Esophagus muscularis mucosa (tissue), 4 donors: ENCODE measurements at regions of chr6 and their contacts with region 1.

Region 1: GRCh38 chr6:100116411-100117194 is 122.6 kb upstream of the MCHR2 start:
- DNase-seq: no peak
- H3K4me3 ChIP-seq: no peak overlapping the region
- H3K27ac ChIP-seq: no peak overlapping the region
- H3K4me1 ChIP-seq: no peaks in the 10 kb centered on the region
- H3K27me3 ChIP-seq: no peaks in the 10 kb centered on the region
- CTCF ChIP-seq: peak; percentile 44 to 58 (median 55)
- EP300 ChIP-seq: no peak
- POLR2A ChIP-seq: no peak

Region 2: DNA sequence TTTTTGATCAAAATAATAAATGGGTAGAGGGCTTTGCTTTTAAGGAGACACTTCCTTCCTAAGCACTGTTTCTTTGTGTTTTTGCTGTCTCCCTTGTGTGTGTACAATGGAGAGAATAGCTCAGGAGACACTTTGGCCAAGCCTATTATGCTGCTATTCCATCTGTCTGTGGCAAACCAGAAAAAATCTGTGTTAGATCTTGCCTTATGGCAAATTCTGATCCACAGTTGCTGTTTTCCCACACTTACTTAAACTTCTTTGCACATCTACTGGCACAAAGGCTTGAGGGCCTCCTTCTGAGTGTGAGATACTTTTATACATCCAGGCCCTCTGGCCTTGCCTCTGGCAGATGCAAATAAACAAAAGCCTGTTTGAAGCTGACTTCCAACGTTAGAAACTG is 456.4 kb before region 1 on chr6:
- intact Hi-C with region 1: no loop called
- DNase-seq: no peak
- H3K4me3 ChIP-seq: no peak overlapping the region
- H3K27ac ChIP-seq: no peak overlapping the region
- H3K4me1 ChIP-seq: no peaks in the 10 kb centered on the region
- H3K27me3 ChIP-seq: no peaks in the 10 kb centered on the region
- CTCF ChIP-seq: no peak
- EP300 ChIP-seq: no peak
- POLR2A ChIP-seq: no peak

Region 3: DNA sequence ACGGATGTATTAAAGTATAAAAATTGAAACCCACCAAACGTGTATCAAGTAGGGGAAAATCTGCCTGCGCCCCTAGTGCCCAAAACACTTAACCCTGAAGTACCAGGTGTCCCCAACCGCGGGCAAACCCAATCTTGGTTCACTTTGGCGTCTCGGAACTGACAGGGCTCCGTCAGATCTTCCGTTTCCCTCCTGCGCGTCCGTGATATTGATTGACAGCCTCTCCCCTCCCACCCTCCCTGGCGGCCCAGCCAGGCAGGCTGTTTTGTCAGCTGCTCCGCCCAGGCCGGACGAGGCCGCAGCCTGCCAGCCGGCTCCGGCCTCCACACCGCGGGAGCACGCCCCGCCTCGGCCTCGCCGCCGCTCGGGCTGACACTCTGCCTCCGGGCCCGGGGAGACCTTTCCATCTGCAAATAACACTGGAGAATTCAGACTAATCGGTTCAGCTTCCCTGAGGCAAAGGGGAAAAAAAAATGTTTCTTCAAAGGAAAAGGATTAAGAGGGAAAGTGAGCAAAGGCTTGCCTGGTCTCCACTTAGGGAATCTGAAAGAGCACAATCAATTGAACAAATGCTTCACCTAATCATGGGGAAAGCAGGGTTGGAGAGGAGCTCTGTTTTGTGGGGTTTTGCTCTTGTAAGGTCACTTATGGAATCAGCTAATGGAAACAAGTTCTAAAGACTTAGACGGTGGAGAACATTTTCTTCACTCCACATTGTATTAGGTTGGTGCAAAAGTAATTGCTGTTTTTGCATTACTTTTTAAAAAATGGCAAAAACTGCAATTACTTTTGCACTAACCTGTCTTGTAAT is 112.4 kb after region 1 on chr6:
- intact Hi-C with region 1: no loop called
- DNase-seq: no peak
- H3K4me3 ChIP-seq: peak overlapping the region; percentile 49 to 59 (median 51)
- H3K27ac ChIP-seq: no peak overlapping the region
- H3K4me1 ChIP-seq: peaks cover 5 to 10% (median 10%) of the 10 kb centered on the region in 4 donors
- H3K27me3 ChIP-seq: no peaks in the 10 kb centered on the region
- CTCF ChIP-seq: peak in 1 of 3 experiments; percentile 7
- EP300 ChIP-seq: no peak
- POLR2A ChIP-seq: no peak

Region 4: DNA sequence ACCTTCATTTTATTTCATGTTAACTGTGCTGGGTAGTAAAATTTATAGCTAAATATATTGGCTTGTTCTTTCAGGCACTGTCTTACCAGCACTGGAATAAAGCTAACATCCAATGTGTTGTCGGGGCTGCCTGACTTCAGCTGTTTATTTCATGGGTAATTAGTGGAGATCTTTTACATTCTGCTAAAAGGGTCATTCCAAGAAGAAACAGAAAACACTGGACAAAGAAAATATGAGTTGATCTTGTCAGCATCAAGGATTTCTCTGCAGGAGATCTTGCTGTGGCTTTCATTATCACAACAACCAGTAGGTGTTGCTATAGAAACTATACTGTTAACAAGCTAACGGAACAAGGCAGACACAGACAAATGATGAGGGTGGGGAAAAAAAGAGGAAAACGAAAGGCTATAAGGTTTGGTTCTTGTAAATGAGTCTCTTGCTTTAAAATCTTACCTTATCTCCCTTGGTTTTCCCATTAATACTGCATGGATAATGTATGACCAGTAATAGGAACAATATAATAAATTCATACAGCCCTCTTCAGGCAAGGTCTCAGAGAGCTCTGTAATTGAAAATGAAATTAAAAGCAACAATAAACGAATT is 141.3 kb after region 1 on chr6:
- intact Hi-C with region 1: no loop called
- DNase-seq: no peak
- H3K4me3 ChIP-seq: no peak overlapping the region
- H3K27ac ChIP-seq: no peak overlapping the region
- H3K4me1 ChIP-seq: no peaks in the 10 kb centered on the region
- H3K27me3 ChIP-seq: no peaks in the 10 kb centered on the region
- CTCF ChIP-seq: no peak
- EP300 ChIP-seq: no peak
- POLR2A ChIP-seq: no peak

Region 5: DNA sequence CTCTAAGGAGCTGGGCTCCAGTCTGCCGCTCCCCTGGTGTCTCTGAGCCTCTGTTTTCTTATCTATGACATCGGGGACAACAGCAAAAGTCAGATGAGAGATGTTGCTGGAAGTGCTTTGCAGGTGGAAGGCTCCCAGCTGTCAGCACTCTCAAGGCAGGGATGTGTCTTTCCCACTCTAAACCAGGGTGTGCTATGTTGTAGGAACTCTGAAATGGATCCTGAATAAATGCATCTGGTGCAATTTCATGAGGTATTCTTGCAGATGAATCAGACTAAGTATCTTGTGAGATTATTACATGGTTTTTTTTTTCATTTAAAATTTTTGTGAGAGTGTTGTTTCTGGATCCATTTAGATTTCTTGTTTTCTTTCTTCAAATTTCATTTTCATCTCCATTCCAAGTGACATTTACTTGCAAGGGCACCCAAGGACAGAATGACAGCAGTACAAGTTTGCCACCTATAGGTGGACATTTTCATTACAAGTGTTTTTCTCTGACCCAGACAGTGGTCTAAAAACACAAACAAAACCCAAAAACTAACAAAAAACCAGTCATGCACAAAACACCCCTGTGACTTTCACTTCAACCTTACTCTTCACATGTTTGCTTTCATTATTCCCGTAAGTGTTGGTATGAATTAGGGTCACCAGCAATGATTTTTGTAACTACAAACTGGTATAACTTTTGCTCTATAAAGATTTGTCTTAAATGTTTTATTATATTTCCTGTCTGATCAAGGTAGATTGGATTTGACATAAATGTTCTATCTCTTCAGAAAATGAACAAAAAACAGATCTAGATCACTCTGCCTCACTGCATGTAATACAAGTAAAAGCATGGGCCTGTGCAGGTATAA is 362.8 kb after region 1 on chr6:
- intact Hi-C with region 1: loop called (anchors 5 kb)
- DNase-seq: no peak
- H3K4me3 ChIP-seq: no peak overlapping the region
- H3K27ac ChIP-seq: no peak overlapping the region
- H3K4me1 ChIP-seq: no peaks in the 10 kb centered on the region
- H3K27me3 ChIP-seq: peaks cover 0 to 21% (median 0%) of the 10 kb centered on the region in 4 donors
- CTCF ChIP-seq: peak; percentile 35 to 60 (median 55)
- EP300 ChIP-seq: no peak
- POLR2A ChIP-seq: no peak

Region 6: DNA sequence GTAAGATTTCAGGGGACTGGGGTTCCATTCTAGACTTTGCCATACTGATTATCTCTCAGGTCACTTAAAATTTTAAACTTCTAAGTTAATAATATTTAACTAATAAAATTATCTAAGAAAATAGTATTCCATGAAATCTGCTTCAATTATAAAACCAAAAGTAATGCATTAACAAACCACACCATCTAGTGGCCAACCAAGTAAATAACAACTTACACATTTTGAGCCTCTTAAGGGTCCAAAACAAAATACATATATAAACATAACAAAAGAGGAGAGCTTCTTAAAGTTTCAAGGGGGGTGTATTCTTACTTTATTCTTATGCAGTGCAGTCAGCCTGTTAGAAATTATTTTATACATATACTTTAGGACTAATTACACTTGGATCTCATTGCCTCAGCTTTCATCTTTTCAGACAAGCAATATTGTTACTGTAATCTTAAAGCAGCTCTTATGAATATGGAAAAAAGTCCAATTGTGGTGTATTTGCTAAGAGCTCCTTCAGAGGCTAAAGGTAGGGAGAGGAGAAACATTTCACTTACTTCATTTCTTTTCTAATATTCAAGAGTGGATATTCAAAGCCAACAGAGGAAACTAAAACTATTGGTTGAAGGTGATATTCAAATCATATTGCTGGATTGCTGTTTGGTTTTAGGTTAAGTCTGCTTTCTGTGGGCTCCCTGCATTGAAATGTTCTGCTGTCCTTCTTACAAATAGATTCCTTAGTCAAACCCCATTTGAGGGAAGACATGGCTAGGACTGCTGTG is 547.9 kb after region 1 on chr6:
- intact Hi-C with region 1: loop called (anchors 5 kb)
- DNase-seq: no peak
- H3K4me3 ChIP-seq: no peak overlapping the region
- H3K27ac ChIP-seq: no peak overlapping the region
- H3K4me1 ChIP-seq: peaks cover 0 to 5% (median 0%) of the 10 kb centered on the region in 4 donors
- H3K27me3 ChIP-seq: no peaks in the 10 kb centered on the region
- CTCF ChIP-seq: peak; percentile 58 to 72 (median 68)
- EP300 ChIP-seq: no peak
- POLR2A ChIP-seq: no peak